ENCODE measurements at regions of chr7 and their contacts with region 1.

Region 1: DNA sequence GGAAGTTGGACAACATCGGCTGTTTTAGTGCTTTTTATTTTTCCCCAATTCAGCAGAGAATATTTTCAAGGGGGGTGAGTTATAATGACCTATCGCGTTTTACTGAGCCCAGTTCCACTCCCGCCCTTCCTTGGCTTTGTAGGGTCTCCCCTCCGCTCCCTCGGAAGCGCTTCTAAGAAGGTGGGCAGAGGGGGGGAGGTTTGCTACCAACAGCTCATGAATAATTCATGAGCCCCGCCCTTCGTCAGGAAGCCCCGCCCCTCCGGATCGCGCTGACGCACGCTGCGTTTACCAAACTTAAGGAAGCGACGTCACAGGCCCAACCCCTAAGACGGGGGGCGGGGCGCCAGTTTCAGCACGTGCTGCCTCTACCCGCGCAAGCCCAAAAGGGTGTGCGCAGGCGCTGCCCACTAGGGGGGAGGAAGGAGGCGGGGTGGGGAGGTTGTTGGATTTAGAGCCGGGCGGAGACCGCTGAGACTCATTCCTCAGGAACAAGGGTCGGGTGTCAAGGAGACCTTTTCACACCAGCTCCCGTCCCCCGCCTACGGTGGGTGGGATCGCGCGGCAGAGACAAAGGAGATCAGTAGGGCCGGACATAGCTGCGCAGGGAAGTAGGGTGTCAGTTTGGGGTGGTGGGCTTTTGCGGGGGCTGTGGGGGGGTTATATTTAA is 529 bp upstream of the MEPCE start:
- DNase-seq: peak; percentile 100
- H3K4me3 Mint-ChIP-seq: peak overlapping the region; percentile 93
- H3K27ac Mint-ChIP-seq: peak overlapping the region; percentile 99
- H3K4me1 Mint-ChIP-seq: peaks cover 47% of the 10 kb centered on the region
- H3K27me3 Mint-ChIP-seq: peaks cover 5% of the 10 kb centered on the region

Region 2: DNA sequence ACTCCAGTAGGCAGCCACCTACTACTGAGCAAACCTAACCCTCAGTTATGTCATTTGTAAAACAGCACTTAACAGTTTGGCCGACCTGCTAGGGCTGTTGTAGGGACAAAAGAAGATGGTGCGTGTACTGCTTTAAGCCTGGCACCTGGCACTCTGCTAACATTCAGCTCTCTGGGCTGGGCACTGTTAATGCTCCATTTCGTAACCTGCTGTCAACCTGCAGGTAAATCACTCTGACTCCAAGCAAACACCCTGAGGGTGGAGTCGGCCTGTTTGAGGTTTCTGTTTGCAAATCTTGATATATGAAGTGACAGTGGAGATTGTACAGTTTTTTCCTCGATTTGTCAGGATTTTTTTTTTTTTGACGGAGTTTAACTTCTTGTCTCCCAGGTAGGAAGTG is 406.4 kb before region 1 on chr7:
- CTCF ChIA-PET with region 1: no interaction called
- intact Hi-C with region 1: loop called (anchors 2 kb)
- DNase-seq: no peak
- H3K4me3 Mint-ChIP-seq: no peak overlapping the region
- H3K27ac Mint-ChIP-seq: peak overlapping the region; percentile 87
- H3K4me1 Mint-ChIP-seq: peaks cover 67% of the 10 kb centered on the region
- H3K27me3 Mint-ChIP-seq: no peaks in the 10 kb centered on the region

Region 3: GRCh38 chr7:100148559-100149350 is 280.3 kb before region 1 on chr7 and contains the start of gene LAMTOR4:
- CTCF ChIA-PET with region 1: no interaction called
- intact Hi-C with region 1: loop called (anchors 1 kb)
- DNase-seq: peak; percentile 100
- H3K4me3 Mint-ChIP-seq: peak within 1 kb of the TSS; percentile 100
- H3K27ac Mint-ChIP-seq: peak within 1 kb of the TSS; percentile 99
- H3K4me1 Mint-ChIP-seq: peaks cover 29% of the 10 kb centered on the region
- H3K27me3 Mint-ChIP-seq: no peaks in the 10 kb centered on the region
- total RNA-seq, gene LAMTOR4: 129 to 135 TPM

Region 4: DNA sequence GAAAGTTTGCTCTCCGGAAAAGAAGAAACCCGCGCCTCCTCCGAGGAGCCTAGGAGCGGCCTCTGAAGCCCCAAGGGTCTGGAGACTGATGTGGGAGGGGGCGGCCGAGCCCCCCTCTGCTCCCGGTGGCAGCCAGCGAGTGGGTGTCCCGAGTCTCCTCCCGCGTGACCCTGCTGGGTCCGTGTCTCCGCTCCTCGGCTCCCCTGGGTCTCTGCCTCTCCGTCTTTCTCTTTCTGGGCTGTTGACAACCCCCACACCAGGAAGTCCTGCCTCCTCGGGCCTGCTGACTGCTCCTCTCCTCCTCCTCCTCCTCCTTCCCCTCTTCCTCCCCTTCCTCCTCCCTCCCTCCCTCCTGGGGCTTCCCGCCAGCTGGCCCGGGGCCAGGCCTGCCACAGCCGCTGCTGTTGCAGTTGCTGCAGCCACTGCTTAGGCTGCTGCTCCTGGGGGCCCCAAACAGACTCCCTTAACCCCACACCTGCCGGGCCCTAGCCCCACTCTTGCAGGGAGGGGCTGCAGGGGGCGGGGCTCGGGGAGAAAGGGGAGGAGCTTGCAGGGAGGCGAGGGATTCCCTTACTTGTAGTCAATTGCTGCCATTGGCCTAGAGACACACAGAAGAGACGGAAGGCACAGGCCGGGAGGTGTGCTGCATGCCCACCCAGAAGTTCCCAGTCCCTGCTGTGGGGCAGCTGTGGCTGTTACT is 50.0 kb after region 1 on chr7 and contains the start of gene TSC22D4:
- CTCF ChIA-PET with region 1: no interaction called
- intact Hi-C with region 1: loop called (anchors 2 kb)
- DNase-seq: peak; percentile 93
- H3K4me3 Mint-ChIP-seq: peak within 1 kb of the TSS; percentile 98
- H3K27ac Mint-ChIP-seq: peak within 1 kb of the TSS; percentile 92
- H3K4me1 Mint-ChIP-seq: peaks cover 42% of the 10 kb centered on the region
- H3K27me3 Mint-ChIP-seq: no peaks in the 10 kb centered on the region
- total RNA-seq, gene TSC22D4: 46.0 to 48.7 TPM

Region 5: DNA sequence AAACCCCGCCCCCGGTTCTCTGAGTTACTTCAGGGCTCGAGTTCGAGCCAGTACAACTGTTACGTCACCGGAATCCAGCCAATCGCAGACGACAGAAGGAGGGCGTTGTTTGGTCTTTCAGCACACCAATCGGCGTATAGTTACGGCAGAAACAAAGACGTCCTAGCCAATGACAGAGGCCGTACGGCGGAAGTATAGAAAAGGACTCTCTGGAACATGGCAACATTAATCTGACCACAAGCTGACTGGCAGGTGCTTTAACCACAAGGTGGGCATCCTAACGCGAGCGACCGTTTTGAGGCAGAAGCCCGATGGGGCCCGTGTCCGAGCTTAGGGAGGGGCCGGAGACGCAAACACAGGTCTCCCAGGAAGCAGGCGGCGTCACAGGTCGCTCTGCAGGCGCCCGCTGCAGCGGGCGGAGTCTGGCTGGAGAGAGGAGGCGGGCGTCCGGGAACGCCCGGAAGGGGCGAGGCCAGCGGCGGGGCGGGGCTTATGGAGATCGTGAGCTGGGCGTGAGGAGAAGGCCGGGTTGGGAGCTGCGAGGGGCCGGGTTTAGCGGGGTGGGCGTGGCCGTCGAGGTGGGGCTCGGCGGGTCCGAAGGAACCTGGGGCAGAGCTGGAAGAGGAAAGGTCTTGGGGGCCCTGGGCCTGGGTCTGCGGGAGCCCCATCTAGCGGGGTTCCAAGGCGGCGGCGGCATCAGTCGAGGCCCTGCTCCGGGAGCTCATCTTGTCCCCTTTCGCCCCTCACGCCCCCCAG is 183.1 kb after region 1 on chr7 and contains the start of gene MOSPD3:
- CTCF ChIA-PET with region 1: no interaction called
- intact Hi-C with region 1: loop called (anchors 1 kb)
- DNase-seq: peak; percentile 99
- H3K4me3 Mint-ChIP-seq: peak within 1 kb of the TSS; percentile 98
- H3K27ac Mint-ChIP-seq: peak within 1 kb of the TSS; percentile 99
- H3K4me1 Mint-ChIP-seq: peaks cover 13% of the 10 kb centered on the region
- H3K27me3 Mint-ChIP-seq: no peaks in the 10 kb centered on the region
- total RNA-seq, gene MOSPD3: 12.3 to 13.0 TPM

Region 6: GRCh38 chr7:100874577-100875355 is 445.7 kb after region 1 on chr7 and contains the start of gene SRRT:
- CTCF ChIA-PET with region 1: no interaction called
- intact Hi-C with region 1: loop called (anchors 1 kb)
- DNase-seq: peak; percentile 99
- H3K4me3 Mint-ChIP-seq: peak within 1 kb of the TSS; percentile 97
- H3K27ac Mint-ChIP-seq: peak within 1 kb of the TSS; percentile 98
- H3K4me1 Mint-ChIP-seq: peaks cover 44% of the 10 kb centered on the region
- H3K27me3 Mint-ChIP-seq: no peaks in the 10 kb centered on the region
- total RNA-seq, gene SRRT: 166 to 169 TPM

Measured in activated naive CD4-positive, alpha-beta T cell treated with anti-CD3 and anti-CD28 coated beads for 36 hours (primary cell).